Activated CD4-positive, alpha-beta memory T cell treated with anti-CD3 and anti-CD28 coated beads for 36 hours (primary cell): ENCODE measurements at regions of chr2 and their contacts with region 1.

Region 1: DNA sequence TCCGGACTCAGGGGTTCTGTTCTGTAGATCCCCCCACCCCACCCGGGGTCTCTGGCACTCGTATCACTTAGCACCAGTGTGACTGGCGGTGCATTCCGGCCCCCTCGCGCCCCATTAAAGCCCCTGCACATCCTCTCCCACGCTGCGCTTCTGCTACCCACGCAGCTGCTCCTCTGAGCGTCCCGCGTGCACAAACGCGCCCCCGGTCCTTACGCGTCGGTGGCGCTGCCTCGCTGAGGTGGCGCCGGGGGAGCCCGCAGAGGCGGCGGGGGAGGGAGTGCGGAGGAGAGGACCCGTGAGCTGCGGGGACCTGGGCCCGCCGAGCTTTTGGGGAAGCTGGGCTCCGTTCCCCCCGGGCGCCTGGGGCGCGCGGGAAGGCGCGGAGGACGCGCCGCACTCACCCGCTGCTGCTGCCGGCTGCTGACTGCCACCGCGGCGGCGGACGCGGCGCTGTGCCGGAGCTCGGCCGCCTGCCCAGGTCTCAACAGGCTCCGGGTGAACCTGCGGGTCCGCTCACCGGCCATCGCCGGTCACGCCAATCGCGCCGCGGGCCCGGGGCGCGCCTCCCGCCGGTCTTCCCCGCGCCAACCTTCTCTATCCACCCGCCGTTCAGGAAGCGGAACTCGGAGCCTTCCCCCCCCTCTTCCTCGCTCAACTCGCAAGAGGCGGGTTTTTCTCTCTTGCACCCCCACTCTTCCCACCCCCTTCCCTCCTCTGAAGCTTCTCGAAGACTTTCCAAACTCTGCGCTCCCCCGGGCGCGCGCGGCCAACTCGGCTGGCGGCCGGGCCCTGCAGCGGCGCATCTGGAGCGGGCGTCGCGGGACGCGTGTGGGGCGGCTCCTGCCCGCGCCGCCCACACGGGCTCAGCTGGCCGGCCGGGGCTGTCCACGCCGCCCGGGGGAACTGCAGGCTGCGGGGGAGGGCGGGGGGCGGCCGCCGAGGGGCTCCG is at the start of gene DOCK10:
- DNase-seq: peak; percentile 67
- H3K4me3 Mint-ChIP-seq: peak within 1 kb of the TSS; percentile 88
- H3K27ac Mint-ChIP-seq: peak within 1 kb of the TSS; percentile 96
- H3K4me1 Mint-ChIP-seq: peaks cover 44% of the 10 kb centered on the region
- H3K27me3 Mint-ChIP-seq: no peaks in the 10 kb centered on the region
- total RNA-seq, gene DOCK10: 134 to 139 TPM

Region 2: GRCh38 chr2:223944703-223945531 is 1097.2 kb before region 1 on chr2 and contains the start of gene WDFY1:
- CTCF ChIA-PET with region 1: no interaction called
- POLR2A ChIA-PET with region 1: no interaction called
- intact Hi-C with region 1: loop called (anchors 2 kb)
- DNase-seq: peak; percentile 88
- H3K4me3 Mint-ChIP-seq: peak within 1 kb of the TSS; percentile 91
- H3K27ac Mint-ChIP-seq: peak within 1 kb of the TSS; percentile 91
- H3K4me1 Mint-ChIP-seq: peaks cover 54% of the 10 kb centered on the region
- H3K27me3 Mint-ChIP-seq: no peaks in the 10 kb centered on the region
- total RNA-seq, gene WDFY1: 48.7 to 50.1 TPM

Region 3: DNA sequence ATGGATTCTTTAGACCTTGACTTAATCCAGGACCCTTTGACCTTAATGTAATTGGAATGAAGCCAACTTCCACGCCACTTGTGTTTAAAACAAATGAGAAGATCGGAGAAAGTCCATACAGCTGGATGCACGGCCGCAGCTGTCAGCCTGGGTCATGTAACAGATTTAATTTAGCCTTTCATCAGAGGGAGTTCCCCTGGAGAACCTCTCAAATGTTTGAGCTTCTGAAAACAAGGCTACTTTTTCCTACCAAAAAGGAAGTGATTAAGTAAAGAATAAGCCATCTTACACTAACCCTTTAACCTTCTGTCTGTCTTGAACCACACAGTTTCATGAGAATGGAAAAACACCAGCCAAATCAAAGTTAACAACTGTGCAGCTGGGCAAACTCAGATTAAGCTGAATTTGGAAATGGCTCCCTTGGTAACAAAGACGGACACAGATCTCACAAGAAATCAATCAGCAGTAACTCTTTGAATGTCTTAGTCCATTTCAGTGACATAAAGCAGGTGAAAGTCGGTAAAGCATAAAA is 103.4 kb before region 1 on chr2:
- CTCF ChIA-PET with region 1: no interaction called
- POLR2A ChIA-PET with region 1: interaction called, 5 read pairs
- intact Hi-C with region 1: loop called (anchors 2 kb)
- DNase-seq: peak; percentile 56
- H3K4me3 Mint-ChIP-seq: peak overlapping the region; percentile 67
- H3K27ac Mint-ChIP-seq: peak overlapping the region; percentile 79
- H3K4me1 Mint-ChIP-seq: peaks cover 80% of the 10 kb centered on the region
- H3K27me3 Mint-ChIP-seq: no peaks in the 10 kb centered on the region

Region 4: DNA sequence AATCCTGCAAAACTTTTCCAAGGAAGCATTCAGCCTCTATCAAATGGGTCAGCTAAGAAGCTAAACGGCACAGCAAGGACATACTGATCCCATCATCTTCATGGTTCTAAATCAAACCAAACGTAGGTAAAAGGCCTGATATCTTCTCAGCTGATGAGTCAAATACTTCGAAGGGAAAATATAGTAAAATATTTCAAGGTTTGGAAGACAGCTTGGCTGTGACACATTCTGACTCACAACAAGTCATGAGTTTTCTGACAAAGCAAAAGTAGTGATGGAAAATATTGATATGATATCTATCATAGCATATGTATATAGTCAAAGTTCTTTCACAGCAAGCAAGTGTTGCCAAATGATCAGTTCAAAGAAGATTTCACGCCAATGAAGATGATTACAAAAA is 31.3 kb before region 1 on chr2:
- CTCF ChIA-PET with region 1: interaction called, 3 read pairs
- POLR2A ChIA-PET with region 1: interaction called, 7 read pairs
- intact Hi-C with region 1: loop called (anchors 1 kb)
- DNase-seq: no peak
- H3K4me3 Mint-ChIP-seq: no peak overlapping the region
- H3K27ac Mint-ChIP-seq: peak overlapping the region; percentile 78
- H3K4me1 Mint-ChIP-seq: peaks cover 93% of the 10 kb centered on the region
- H3K27me3 Mint-ChIP-seq: no peaks in the 10 kb centered on the region

Region 5: DNA sequence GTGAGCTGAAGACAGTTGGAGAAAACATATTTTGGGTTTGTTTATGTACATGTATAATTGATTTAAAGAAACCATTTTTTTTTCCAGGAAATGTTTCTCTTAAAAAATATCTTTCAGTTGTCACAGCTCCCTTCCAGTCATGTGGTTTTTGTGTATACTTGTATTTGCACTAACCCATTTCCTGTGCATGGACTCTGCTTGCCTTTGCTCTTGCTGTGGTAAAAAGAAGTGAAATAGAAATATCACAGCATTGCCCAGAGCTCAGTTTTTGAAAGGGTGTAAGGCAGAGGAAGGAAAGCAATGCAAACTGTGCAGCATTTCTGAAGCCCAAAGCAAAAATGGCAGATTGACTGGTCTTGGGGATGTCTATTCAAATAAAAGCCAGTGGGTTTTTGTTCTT is 10.6 kb after region 1 on chr2:
- CTCF ChIA-PET with region 1: interaction called, 5 read pairs
- POLR2A ChIA-PET with region 1: interaction called, 14 read pairs
- intact Hi-C with region 1: loop called (anchors 1 kb)
- DNase-seq: no peak
- H3K4me3 Mint-ChIP-seq: no peak overlapping the region
- H3K27ac Mint-ChIP-seq: peak overlapping the region; percentile 57
- H3K4me1 Mint-ChIP-seq: peaks cover 59% of the 10 kb centered on the region
- H3K27me3 Mint-ChIP-seq: no peaks in the 10 kb centered on the region